ENCODE measurements at regions of chr19 and their contacts with region 1.

Region 1: DNA sequence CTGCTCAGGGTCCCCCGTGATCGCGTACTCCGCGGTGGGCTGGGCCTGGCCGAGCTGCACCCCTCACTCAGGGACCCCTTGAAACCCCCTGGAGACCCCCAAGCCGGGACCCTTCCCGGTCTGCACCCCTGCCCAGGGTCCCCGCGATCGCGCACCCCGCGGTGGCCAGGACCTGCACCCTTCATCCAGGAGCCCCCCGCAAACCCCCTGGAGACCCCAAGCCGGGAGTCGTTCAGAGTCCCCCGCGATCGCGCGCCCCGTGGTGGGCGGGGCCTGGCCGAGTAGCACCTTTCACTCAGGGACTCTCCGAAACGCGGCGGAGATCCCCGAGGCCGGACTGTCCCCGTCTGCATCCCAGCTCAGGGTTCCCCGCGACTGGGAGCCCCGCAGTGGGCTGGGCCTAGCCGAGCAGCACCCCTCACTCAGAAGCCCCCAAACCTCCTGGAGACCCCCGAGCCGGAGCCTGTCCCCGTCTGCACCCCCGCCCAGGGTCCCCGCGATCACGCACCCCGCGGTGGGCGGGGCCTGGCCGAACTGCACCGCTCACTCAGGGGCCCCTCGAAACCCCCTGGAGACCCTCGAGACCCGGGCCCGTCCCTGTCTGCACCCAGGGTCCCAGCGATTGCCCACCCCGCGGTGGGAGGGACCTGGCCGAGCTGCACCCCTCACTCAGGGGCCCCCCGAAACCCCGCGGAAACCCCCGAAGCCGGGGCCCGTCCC is 748 bp downstream of the LMNB2 start:
- DNase-seq: peak in 1 of 3 donors; percentile 69
- H3K4me3 ChIP-seq: peak overlapping the region; percentile 65 to 91 (median 87)
- H3K4me3 Mint-ChIP-seq: peak overlapping the region; percentile 88 to 89
- H3K27ac ChIP-seq: peak overlapping the region in 1 of 2 donors; percentile 78
- H3K27ac Mint-ChIP-seq: peak overlapping the region in 6 of 7 donors; percentile 64 to 90 (median 84)
- H3K4me1 ChIP-seq: peaks cover 20 to 23% of the 10 kb centered on the region in 2 donors
- H3K4me1 Mint-ChIP-seq: peaks cover 26% of the 10 kb centered on the region
- H3K27me3 ChIP-seq: no peaks in the 10 kb centered on the region
- H3K27me3 Mint-ChIP-seq: peaks cover 0 to 2% (median 0%) of the 10 kb centered on the region in 3 donors
- CTCF ChIP-seq: no peak

Region 2: DNA sequence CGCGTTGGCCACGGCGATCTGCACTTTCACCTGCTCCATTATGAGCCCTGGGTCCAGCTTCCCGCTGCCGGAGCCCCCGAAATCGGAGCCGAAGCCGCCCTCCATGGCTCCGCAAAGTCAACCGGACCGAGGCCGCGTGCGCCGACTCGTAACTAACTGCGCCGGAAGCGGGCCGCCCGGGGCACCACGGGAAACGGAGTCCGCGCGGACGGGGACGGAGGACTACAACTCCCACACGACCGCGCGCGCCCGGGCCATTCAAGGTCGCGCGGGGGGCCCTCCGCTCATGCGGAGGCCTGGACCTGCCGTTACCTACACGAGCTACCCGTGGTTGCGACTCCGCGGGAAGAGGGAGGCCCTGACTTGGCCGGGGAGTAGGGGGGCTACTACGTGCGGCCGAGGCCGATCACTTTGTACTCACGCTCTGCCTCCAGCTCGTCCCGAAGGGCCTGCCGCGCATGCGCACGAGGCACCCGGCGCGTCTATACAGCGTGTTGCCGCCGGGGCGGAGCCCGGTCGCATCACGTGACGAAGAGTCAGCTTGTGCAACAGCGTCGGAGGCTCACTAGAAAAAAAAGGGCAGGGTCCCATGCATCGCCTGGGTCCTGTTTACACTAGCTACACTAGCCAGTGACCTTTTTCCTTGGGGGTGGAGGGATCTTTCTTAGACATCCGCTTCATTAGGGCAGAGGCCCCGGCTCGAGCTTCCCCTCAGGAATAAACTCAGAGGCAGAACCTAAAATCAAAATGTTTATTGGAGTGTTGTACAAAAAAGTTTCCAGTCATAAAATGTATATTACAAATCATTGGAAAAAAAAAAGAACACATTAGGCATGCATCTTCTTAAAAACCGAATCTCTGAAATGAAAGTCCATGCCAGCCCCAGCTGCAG is 28.3 kb before region 1 on chr19 and contains the start of gene TIMM13:
- intact Hi-C with region 1: loop called in 1 of 2 experiments (anchors 2 kb)
- DNase-seq: peak; percentile 96
- H3K4me3 ChIP-seq: peak within 1 kb of the TSS; percentile 64 to 88 (median 71)
- H3K4me3 Mint-ChIP-seq: peak within 1 kb of the TSS; percentile 83 to 95
- H3K27ac ChIP-seq: peak within 1 kb of the TSS; percentile 78 to 95
- H3K27ac Mint-ChIP-seq: peak within 1 kb of the TSS; percentile 90 to 99 (median 97)
- H3K4me1 ChIP-seq: peaks cover 21 to 28% of the 10 kb centered on the region in 2 donors
- H3K4me1 Mint-ChIP-seq: peaks cover 19% of the 10 kb centered on the region
- H3K27me3 ChIP-seq: no peaks in the 10 kb centered on the region
- H3K27me3 Mint-ChIP-seq: peaks cover 0 to 2% (median 0%) of the 10 kb centered on the region in 3 donors
- CTCF ChIP-seq: no peak
- polyA plus RNA-seq, gene TIMM13: 17.3 to 89.3 (median 72.4) TPM

Region 3: GRCh38 chr19:2507109-2507508 is 51.1 kb after region 1 on chr19:
- intact Hi-C with region 1: no loop called
- DNase-seq: peak; percentile 72 to 76 (median 73)
- H3K4me3 ChIP-seq: peak overlapping the region in 1 of 3 experiments; percentile 48
- H3K4me3 Mint-ChIP-seq: peak overlapping the region; percentile 52 to 72
- H3K27ac ChIP-seq: peak overlapping the region; percentile 23 to 73
- H3K27ac Mint-ChIP-seq: peak overlapping the region; percentile 63 to 92 (median 79)
- H3K4me1 ChIP-seq: peaks cover 29 to 31% of the 10 kb centered on the region in 2 donors
- H3K4me1 Mint-ChIP-seq: peaks cover 32% of the 10 kb centered on the region
- H3K27me3 ChIP-seq: no peaks in the 10 kb centered on the region
- H3K27me3 Mint-ChIP-seq: peaks cover 2 to 6% (median 6%) of the 10 kb centered on the region in 3 donors
- CTCF ChIP-seq: no peak

Region 4: DNA sequence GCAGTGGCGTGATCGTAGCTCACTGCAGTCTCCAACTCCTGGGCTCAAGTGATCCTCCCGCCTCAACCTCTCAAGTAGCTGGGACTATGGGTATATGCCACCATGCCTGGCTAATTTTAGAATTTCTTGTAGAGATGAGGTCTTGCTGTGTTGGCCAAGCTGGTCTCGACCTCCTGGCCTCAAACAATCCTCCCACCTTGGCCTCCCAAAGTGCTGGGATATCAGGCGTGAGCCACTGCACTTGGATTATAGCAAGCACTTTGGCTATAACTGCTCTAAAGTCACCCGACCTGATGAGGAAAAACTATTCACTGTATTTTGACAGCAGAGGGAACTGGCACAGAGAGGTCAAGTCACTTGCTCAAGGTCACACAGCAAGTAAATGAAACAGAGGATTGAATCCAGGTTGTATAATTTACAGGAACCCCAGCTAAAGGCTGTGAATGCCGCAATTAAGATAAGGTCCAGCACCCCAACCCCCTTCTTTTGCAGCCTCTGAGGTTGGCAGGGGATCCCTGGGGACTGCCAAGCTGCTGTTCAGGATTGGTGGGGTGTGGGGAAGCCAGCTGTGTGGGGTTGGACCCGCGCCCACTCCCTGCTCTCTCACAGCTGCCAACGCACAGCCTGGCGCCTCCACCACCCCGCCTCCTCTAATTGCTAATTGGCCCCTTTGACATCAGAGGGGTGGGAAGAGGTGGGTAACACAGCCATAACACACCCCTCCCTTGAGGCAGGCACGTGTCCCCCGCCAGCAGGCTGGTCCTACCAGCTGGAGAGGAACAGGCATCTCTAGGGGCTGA is 1840.2 kb after region 1 on chr19:
- intact Hi-C with region 1: no loop called
- DNase-seq: no peak
- H3K4me3 ChIP-seq: no peak overlapping the region
- H3K4me3 Mint-ChIP-seq: no peak overlapping the region
- H3K27ac ChIP-seq: no peak overlapping the region
- H3K27ac Mint-ChIP-seq: peak overlapping the region in 1 of 7 donors; percentile 64
- H3K4me1 ChIP-seq: no peaks in the 10 kb centered on the region
- H3K4me1 Mint-ChIP-seq: no peaks in the 10 kb centered on the region
- H3K27me3 ChIP-seq: no peaks in the 10 kb centered on the region
- H3K27me3 Mint-ChIP-seq: peaks cover 0 to 2% (median 0%) of the 10 kb centered on the region in 3 donors
- CTCF ChIP-seq: no peak